CD8-positive, alpha-beta memory T cell (primary cell): ENCODE measurements at regions of chr6 and their contacts with region 1.

Region 1: GRCh38 chr6:135054569-135055498 is at the start of gene HBS1L:
- DNase-seq: peak; percentile 90 to 98 (median 96)
- H3K4me3 ChIP-seq: peak within 1 kb of the TSS; percentile 93
- H3K4me3 Mint-ChIP-seq: peak within 1 kb of the TSS; percentile 97 to 100 (median 99)
- H3K27ac ChIP-seq: peak within 1 kb of the TSS; percentile 91
- H3K27ac Mint-ChIP-seq: peak within 1 kb of the TSS; percentile 98 to 99 (median 99)
- H3K4me1 ChIP-seq: peaks cover 44% of the 10 kb centered on the region
- H3K4me1 Mint-ChIP-seq: peaks cover 38 to 48% (median 48%) of the 10 kb centered on the region in 3 donors
- H3K27me3 ChIP-seq: no peaks in the 10 kb centered on the region
- H3K27me3 Mint-ChIP-seq: peaks cover 1 to 8% of the 10 kb centered on the region in 2 donors
- total RNA-seq, gene HBS1L: 145 to 147 TPM

Region 2: GRCh38 chr6:134984821-134985220 is 70.0 kb before region 1 on chr6:
- CTCF ChIA-PET with region 1: no interaction called
- POLR2A ChIA-PET with region 1: no interaction called
- DNase-seq: no peak
- H3K4me3 ChIP-seq: no peak overlapping the region
- H3K4me3 Mint-ChIP-seq: peak overlapping the region in 1 of 7 donors; percentile 27
- H3K27ac ChIP-seq: no peak overlapping the region
- H3K27ac Mint-ChIP-seq: peak overlapping the region in 4 of 8 donors; percentile 36 to 75 (median 48)
- H3K4me1 ChIP-seq: no peaks in the 10 kb centered on the region
- H3K4me1 Mint-ChIP-seq: peaks cover 19 to 28% (median 22%) of the 10 kb centered on the region in 3 donors
- H3K27me3 ChIP-seq: no peaks in the 10 kb centered on the region
- H3K27me3 Mint-ChIP-seq: no peaks in the 10 kb centered on the region

Region 3: GRCh38 chr6:135088818-135089809 is 34.3 kb after region 1 on chr6:
- CTCF ChIA-PET with region 1: interaction called, 10 read pairs
- POLR2A ChIA-PET with region 1: interaction called, 4 read pairs
- DNase-seq: peak in 3 of 5 donors; percentile 20 to 50 (median 31)
- H3K4me3 ChIP-seq: peak overlapping the region; percentile 49
- H3K4me3 Mint-ChIP-seq: peak overlapping the region; percentile 71 to 86 (median 84)
- H3K27ac ChIP-seq: peak overlapping the region; percentile 9
- H3K27ac Mint-ChIP-seq: peak overlapping the region in 7 of 8 donors; percentile 15 to 93 (median 86)
- H3K4me1 ChIP-seq: peaks cover 68% of the 10 kb centered on the region
- H3K4me1 Mint-ChIP-seq: peaks cover 56 to 68% (median 61%) of the 10 kb centered on the region in 3 donors
- H3K27me3 ChIP-seq: no peaks in the 10 kb centered on the region
- H3K27me3 Mint-ChIP-seq: no peaks in the 10 kb centered on the region

Region 4: GRCh38 chr6:135323202-135323668 is 268.4 kb after region 1 on chr6:
- CTCF ChIA-PET with region 1: no interaction called
- POLR2A ChIA-PET with region 1: no interaction called
- DNase-seq: peak in 1 of 5 donors; percentile 0
- H3K4me3 ChIP-seq: no peak overlapping the region
- H3K4me3 Mint-ChIP-seq: peak overlapping the region in 1 of 7 donors; percentile 3
- H3K27ac ChIP-seq: peak overlapping the region; percentile 68
- H3K27ac Mint-ChIP-seq: no peak overlapping the region
- H3K4me1 ChIP-seq: no peaks in the 10 kb centered on the region
- H3K4me1 Mint-ChIP-seq: peaks cover 8 to 10% (median 8%) of the 10 kb centered on the region in 3 donors
- H3K27me3 ChIP-seq: no peaks in the 10 kb centered on the region
- H3K27me3 Mint-ChIP-seq: peaks cover 0 to 1% of the 10 kb centered on the region in 2 donors